Posterior vena cava (tissue), 2 donors: ENCODE measurements at regions of chr19 and their contacts with region 1.

Region 1: DNA sequence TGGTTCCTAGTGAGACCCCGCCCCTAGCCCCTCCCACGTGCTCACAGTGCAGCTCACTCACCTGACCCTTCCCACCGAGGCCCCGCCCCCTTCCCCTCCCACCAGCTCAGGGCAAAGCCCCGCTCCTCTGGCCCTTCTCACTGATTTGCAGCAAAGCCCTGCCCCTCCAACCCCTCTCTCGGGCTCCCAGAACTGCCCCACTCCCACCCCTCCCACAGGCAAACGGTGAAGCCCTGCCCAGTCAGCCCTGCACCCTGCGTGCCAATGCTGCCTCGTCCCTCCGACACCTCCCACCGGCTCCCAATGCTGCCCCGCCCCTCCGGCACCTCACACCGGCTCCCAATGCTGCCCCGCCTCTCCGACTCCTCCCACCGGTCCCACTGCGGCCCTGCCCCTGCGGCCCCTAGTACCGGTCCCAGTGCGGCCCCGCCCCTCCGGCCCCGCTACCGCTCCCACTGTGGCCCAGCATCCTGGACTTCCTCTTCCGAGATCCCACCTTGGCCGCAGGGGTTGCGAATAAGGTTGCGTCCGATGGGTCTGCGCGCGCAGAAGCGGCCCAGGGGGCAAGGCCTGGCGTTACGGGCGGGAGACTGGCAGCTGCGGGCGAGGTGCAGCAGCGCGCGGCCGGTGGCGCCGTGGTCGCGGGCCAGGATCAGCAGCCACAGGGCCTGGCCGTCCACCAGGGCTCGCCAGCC is 834 bp downstream of the FBXO27 start:
- DNase-seq: peak; percentile 94

Region 2: GRCh38 chr19:38975214-38975860 is 56.2 kb before region 1 on chr19 and contains the start of gene FBXO17:
- intact Hi-C with region 1: loop called in 1 of 2 experiments (anchors 5 kb)
- DNase-seq: peak; percentile 90
- total RNA-seq, gene FBXO17: 17.4 to 23.0 TPM

Region 3: GRCh38 chr19:40274585-40275552 is 1243.4 kb after region 1 on chr19:
- intact Hi-C with region 1: loop called in 1 of 2 experiments (anchors 5 kb)
- DNase-seq: peak; percentile 74